ENCODE measurements at regions of chr11 and their contacts with region 1.

Region 1: GRCh38 chr11:45180179-45180842 is 33.9 kb downstream of the PRDM11 start:
- DNase-seq: peak; percentile 56
- ATAC-seq: peak; percentile 89
- H3K4me3 ChIP-seq: peak overlapping the region; percentile 63
- H3K27ac ChIP-seq: no peak overlapping the region
- H3K4me1 ChIP-seq: peaks cover 9% of the 10 kb centered on the region; the same call in 1 of the 2 replicates
- H3K27me3 ChIP-seq: no peaks in the 10 kb centered on the region
- CTCF ChIP-seq: peak; percentile 51

Region 2: GRCh38 chr11:44936525-44936924 is 243.8 kb before region 1 on chr11:
- CTCF ChIA-PET with region 1: no interaction called
- POLR2A ChIA-PET with region 1: no interaction called
- intact Hi-C with region 1: no loop called
- DNase-seq: peak; percentile 84
- ATAC-seq: peak; percentile 89
- H3K4me3 ChIP-seq: no peak overlapping the region
- H3K27ac ChIP-seq: no peak overlapping the region
- H3K4me1 ChIP-seq: no peaks in the 10 kb centered on the region
- H3K27me3 ChIP-seq: no peaks in the 10 kb centered on the region
- CTCF ChIP-seq: peak; percentile 88

Region 3: DNA sequence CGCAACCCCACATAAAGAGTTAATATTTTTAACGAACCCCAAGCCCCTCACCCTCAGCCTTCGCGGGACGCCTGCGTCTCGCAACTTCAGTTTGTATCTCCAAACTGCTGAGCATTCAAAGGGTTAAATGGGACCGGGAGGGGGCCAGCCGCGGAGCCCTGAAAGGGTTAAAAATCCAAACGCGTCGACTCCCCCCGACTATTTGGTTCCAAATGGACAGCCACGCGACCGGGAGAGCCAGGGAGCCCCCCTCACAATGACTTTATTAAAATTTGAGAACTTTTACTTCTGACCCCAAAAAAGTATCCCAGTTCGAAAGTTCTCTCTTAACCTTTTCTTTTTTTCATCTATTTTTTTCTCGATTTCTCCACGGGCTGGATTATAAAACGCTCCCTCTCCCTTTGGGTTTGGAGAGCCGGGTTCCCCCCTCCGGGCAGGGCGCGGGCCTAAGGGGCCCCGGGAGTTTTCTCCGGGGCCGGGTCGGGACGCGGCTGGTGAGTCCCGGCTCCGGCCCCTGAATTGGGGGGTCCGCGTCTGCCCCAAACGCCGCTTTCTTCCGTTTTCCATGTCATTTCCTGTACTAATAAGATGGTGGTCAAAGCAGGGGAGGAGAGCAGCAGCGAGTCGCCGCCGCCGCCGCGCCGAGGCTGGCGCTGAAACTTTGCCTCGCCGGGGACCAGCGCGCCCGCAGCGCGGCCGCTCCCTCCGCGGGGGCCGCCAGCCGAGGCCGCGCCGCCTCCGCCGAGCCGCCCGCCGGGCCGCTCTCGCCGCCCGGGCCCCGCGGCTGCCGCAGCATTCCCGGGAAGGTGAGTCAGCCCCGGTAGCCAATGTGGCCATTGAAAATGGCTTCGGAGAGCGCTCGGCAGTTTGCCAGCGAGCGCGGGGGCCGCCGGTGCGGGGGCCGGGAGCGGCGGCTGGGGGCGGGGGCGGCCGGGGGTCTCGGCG is 34.0 kb before region 1 on chr11 and contains the start of gene PRDM11:
- CTCF ChIA-PET with region 1: no interaction called
- POLR2A ChIA-PET with region 1: interaction called, 4 read pairs
- intact Hi-C with region 1: loop called (anchors 1 kb)
- DNase-seq: peak; percentile 78
- ATAC-seq: peak; percentile 62
- H3K4me3 ChIP-seq: peak within 1 kb of the TSS; percentile 98
- H3K27ac ChIP-seq: peak within 1 kb of the TSS; percentile 64
- H3K4me1 ChIP-seq: peaks cover 15% of the 10 kb centered on the region
- H3K27me3 ChIP-seq: no peaks in the 10 kb centered on the region
- CTCF ChIP-seq: no peak
- total RNA-seq, gene PRDM11: 5.0 and 6.3 TPM in 2 replicates